ENCODE measurements at regions of chr1 and their contacts with region 1.

Region 1: GRCh38 chr1:23559136-23559984 is at the start of gene ID3:
- DNase-seq: peak; percentile 86 to 96
- ATAC-seq: peak; percentile 67 to 71
- H3K4me3 ChIP-seq: peak within 1 kb of the TSS; percentile 54 to 89 (median 70)
- H3K27ac ChIP-seq: peak within 1 kb of the TSS; percentile 88 to 90 (median 89)
- H3K4me1 ChIP-seq: peaks cover 48 to 66% of the 10 kb centered on the region in 2 donors
- H3K27me3 ChIP-seq: no peaks in the 10 kb centered on the region
- CTCF ChIP-seq: no peak
- POLR2A ChIP-seq: peak; percentile 94 to 99
- total RNA-seq, gene ID3: 67.9 to 124 (median 83.0) TPM

Region 2: DNA sequence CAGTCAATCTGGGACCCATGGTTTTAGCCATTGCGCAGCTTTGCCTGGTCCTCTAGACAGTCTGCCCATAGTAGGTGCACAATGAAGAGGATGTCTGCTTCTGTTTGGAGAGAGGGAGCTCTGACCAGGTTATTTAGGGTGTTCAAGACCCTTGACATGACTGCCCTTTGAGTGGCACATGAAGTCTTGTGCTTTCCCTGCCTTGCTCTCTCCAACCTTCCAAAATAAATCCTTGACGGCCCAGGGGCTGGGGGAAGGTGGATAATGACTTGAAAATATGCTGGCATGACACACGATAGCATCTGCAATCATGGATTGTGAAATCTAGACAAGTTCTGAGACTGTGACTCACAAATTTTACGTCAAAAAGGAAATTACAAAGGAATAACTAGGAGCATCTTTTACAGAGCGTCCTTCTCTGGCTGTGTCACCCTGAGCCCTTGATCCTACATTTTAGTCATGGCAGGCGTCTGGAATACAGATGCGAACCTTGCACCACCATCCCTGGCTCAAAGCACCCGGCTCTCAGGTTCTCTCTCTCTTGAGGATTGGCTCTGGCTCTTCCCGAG is 26.2 kb after region 1 on chr1:
- in situ Hi-C with region 1: no loop called
- intact Hi-C with region 1: loop called (anchors 1 kb)
- DNase-seq: peak; percentile 36 to 89
- ATAC-seq: peak; percentile 81 to 90
- H3K4me3 ChIP-seq: no peak overlapping the region
- H3K27ac ChIP-seq: peak overlapping the region; percentile 58 to 87 (median 68)
- H3K4me1 ChIP-seq: peaks cover 16 to 24% of the 10 kb centered on the region in 2 donors
- H3K27me3 ChIP-seq: no peaks in the 10 kb centered on the region
- CTCF ChIP-seq: no peak
- POLR2A ChIP-seq: no peak

Region 3: DNA sequence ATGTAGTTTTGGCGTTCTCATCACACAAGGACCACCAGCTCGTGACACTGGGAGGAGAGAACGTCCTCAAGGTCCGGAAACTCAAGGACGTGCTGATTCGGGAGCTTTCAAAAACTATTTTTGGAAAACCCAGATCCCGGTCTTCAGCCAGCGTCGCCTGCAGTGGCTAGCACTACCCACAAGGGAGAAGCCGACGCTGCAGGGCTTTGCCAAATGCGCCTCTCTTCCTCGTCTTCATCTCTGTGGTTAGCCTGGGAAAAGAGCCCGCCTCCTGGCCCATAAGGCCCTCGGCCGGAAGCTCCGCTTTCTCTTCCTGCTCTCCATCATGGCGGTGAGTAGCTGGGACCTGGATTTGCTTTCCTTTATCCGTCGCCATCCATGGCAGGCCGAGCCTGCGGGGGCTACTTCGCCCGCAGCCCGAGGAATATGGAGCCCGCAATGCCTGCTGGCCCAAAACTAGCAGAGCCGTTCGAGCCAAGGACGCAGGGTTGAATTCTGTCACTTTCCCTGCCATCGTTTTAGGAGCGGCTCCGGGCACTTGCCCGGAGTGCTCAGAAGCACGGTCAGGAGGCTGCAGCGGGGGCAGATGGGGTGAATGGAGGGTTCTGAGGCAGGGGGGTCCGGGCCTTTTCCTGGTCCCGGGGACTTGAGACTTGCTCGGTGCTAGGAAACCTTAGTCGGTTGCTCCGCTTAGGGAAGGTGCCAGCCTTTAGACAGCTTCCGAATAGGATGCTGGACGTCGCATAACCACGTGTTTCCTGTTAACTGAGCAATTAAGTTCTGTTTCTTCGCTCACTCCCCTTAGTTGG is 132.3 kb after region 1 on chr1 and contains the start of gene RPL11:
- in situ Hi-C with region 1: no loop called
- intact Hi-C with region 1: loop called (anchors 5 kb)
- DNase-seq: peak; percentile 94 to 96
- ATAC-seq: peak; percentile 99 to 100
- H3K4me3 ChIP-seq: peak within 1 kb of the TSS; percentile 85 to 99 (median 93)
- H3K27ac ChIP-seq: peak within 1 kb of the TSS; percentile 84 to 93 (median 91)
- H3K4me1 ChIP-seq: peaks cover 45 to 47% of the 10 kb centered on the region in 2 donors
- H3K27me3 ChIP-seq: no peaks in the 10 kb centered on the region
- CTCF ChIP-seq: peak; percentile 80 to 90 (median 90)
- POLR2A ChIP-seq: peak; percentile 83 to 94
- total RNA-seq, gene RPL11: 302 to 593 (median 504) TPM

Region 4: DNA sequence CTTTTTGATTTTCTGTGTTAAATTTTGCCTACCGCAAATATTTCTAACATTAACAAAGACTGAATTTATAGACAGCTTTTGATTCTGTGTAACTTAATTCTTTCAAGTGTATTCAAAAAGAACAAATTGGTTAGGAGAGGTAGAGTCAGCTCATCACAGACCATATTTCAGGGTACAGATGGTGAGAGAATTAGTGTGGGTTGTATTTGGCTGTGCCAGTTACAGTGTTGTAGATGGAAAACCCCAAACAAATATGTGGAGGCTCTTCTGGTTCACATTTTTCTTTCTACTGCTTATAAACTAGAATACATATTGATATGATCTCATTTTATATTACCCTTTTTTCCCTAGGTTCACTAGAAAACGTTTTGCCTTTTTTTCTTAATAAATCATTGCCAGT is 954.3 kb after region 1 on chr1:
- in situ Hi-C with region 1: no loop called
- intact Hi-C with region 1: no loop called
- DNase-seq: no peak
- ATAC-seq: no peak
- H3K4me3 ChIP-seq: no peak overlapping the region
- H3K27ac ChIP-seq: no peak overlapping the region
- H3K4me1 ChIP-seq: no peaks in the 10 kb centered on the region
- H3K27me3 ChIP-seq: peaks cover 0 to 3% (median 0%) of the 10 kb centered on the region in 3 donors
- CTCF ChIP-seq: no peak
- POLR2A ChIP-seq: no peak